HEK293T (cell line): ENCODE measurements at regions of chr16 and their contacts with region 1.

Region 1: DNA sequence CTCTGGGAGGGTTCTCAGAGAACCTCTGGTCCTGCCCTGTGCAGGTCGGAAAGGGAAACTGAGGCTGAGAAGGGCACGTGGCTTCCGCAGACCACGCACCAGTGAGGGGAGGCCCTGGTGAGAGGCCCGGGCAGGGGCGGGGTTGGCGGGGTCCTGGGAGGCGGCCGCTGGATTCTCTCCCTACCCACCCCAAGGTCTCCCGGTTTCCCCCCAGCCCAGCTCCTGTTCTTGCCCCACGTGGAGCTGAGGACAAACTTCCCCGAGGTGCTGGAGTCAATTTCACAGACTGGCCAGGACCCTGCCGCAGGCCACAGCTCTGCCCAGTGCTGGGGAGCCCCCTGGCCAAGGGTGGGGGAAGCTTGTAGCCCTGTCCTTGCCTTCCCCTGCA is 11.5 kb downstream of the CCL17 start:
- DNase-seq: no peak

Region 2: GRCh38 chr16:57300387-57301125 is 115.6 kb before region 1 on chr16:
- CTCF ChIA-PET with region 1: interaction called, 71 read pairs
- POLR2A ChIA-PET with region 1: interaction called, 18 read pairs
- DNase-seq: peak; percentile 97

Region 3: GRCh38 chr16:57392694-57393093 is 23.4 kb before region 1 on chr16:
- CTCF ChIA-PET with region 1: no interaction called
- POLR2A ChIA-PET with region 1: no interaction called
- DNase-seq: no peak

Region 4: GRCh38 chr16:57403965-57404817 is 11.9 kb before region 1 on chr16 and contains the start of gene CCL17:
- CTCF ChIA-PET with region 1: interaction called, 11 read pairs
- POLR2A ChIA-PET with region 1: interaction called, 6 read pairs
- DNase-seq: no peak

Region 5: DNA sequence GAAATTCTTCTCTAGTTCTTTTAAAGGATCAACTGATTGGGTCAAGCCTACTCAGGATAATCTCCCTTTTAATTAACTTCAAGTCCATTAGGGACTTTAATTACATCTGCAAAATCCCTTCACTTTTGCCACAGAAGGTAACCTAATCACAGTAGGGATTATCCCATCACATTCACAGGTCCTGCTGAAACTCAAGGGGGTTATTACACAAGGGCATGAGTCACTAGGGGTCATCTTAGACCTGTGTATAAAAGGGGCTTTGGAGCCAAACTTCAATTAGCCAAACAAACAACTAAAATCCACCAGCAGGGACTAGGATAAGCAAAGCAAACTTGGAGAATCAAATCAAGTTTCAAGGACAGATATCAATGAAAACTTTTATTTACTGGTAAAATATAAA is 11.7 kb after region 1 on chr16:
- CTCF ChIA-PET with region 1: no interaction called
- POLR2A ChIA-PET with region 1: no interaction called
- DNase-seq: no peak

Region 6: DNA sequence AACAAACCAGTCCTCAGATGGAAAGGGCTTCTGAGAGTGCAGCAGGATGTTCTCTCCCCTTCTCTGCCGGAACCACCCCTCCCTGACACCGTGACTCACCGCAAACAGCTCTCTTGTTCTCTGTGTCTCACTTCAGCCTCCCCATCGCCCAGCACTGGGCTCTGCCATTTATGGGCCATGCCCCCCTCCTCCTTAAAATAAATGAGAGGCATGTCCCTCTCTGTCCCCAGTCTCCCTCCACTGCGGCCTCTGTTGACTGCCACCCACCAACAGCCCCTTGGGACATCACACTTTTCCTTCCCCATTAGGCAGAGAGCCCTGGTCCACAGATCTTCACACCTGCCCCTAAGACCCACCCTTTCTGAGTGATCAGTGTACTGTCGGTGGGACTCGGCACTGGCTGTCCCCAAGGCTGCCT is 114.0 kb after region 1 on chr16:
- CTCF ChIA-PET with region 1: no interaction called
- POLR2A ChIA-PET with region 1: no interaction called
- DNase-seq: no peak